ENCODE measurements at regions of chr19 and their contacts with region 1.

Region 1: GRCh38 chr19:1039646-1040475 is at the start of gene ABCA7:
- DNase-seq: peak; percentile 98 to 99 (median 98)
- H3K4me3 ChIP-seq: peak within 1 kb of the TSS; percentile 56 to 100
- H3K4me3 Mint-ChIP-seq: peak within 1 kb of the TSS; percentile 95 to 100 (median 97)
- H3K27ac ChIP-seq: peak within 1 kb of the TSS; percentile 75
- H3K27ac Mint-ChIP-seq: peak within 1 kb of the TSS; percentile 91 to 97 (median 95)
- H3K4me1 ChIP-seq: peaks cover 54% of the 10 kb centered on the region
- H3K4me1 Mint-ChIP-seq: peaks cover 27 to 69% (median 48%) of the 10 kb centered on the region in 4 donors
- H3K27me3 ChIP-seq: no peaks in the 10 kb centered on the region
- H3K27me3 Mint-ChIP-seq: no peaks in the 10 kb centered on the region
- total RNA-seq, gene ABCA7: 313 to 319 TPM

Region 2: DNA sequence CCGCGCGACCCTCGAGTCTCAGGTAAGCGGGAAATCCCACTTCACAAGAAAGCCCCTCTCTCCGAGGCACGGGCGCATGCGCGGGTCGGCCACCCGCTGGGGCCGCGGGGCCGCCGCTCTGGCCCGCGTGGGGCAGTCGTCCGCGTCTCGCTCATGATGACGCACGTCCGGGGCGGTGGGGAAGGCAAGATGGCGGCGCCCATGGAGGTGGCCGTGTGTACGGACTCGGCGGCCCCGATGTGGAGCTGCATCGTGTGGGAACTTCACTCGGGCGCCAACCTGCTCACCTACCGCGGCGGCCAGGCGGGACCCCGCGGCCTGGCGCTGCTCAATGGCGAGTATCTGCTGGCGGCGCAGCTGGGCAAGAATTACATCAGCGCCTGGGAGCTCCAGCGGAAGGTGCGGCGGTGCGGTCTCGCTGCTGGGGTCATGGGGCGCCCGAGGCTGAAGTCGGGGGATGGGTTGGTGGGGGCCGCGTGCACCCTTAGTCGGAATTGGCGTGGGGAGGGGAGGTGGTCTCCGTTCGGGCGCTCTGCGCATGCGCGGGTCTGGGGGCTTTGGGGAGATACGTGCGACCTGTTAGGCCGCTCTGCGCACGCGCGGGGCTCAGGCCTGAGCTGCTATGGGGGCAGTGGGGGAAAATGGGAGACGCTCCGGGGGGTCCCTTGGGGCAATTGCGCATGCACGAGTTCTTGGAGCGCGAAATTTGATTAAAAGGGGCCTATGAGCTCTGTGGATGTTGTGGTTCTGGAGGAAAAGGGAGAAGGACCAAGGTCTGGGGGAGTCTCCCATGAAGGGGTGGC is 55.5 kb before region 1 on chr19 and contains the start of gene WDR18:
- CTCF ChIA-PET with region 1: no interaction called
- POLR2A ChIA-PET with region 1: interaction called, 16 read pairs
- intact Hi-C with region 1: loop called (anchors 5 kb)
- DNase-seq: peak; percentile 79 to 87 (median 81)
- H3K4me3 ChIP-seq: peak within 1 kb of the TSS; percentile 65 to 69
- H3K4me3 Mint-ChIP-seq: peak within 1 kb of the TSS; percentile 89 to 96 (median 92)
- H3K27ac ChIP-seq: peak within 1 kb of the TSS; percentile 75
- H3K27ac Mint-ChIP-seq: peak within 1 kb of the TSS; percentile 84 to 96 (median 90)
- H3K4me1 ChIP-seq: peaks cover 24% of the 10 kb centered on the region
- H3K4me1 Mint-ChIP-seq: peaks cover 4 to 18% (median 12%) of the 10 kb centered on the region in 4 donors
- H3K27me3 ChIP-seq: no peaks in the 10 kb centered on the region
- H3K27me3 Mint-ChIP-seq: no peaks in the 10 kb centered on the region
- total RNA-seq, gene WDR18: 53.9 to 60.3 TPM

Region 3: GRCh38 chr19:1001538-1002166 is 38.2 kb before region 1 on chr19:
- CTCF ChIA-PET with region 1: no interaction called
- POLR2A ChIA-PET with region 1: interaction called, 12 read pairs
- intact Hi-C with region 1: loop called (anchors 2 kb)
- DNase-seq: peak; percentile 60 to 71 (median 61)
- H3K4me3 ChIP-seq: no peak overlapping the region
- H3K4me3 Mint-ChIP-seq: no peak overlapping the region
- H3K27ac ChIP-seq: no peak overlapping the region
- H3K27ac Mint-ChIP-seq: peak overlapping the region in 1 of 7 donors; percentile 21
- H3K4me1 ChIP-seq: peaks cover 15% of the 10 kb centered on the region
- H3K4me1 Mint-ChIP-seq: peaks cover 2 to 18% (median 10%) of the 10 kb centered on the region in 4 donors
- H3K27me3 ChIP-seq: peaks cover 26% of the 10 kb centered on the region
- H3K27me3 Mint-ChIP-seq: peaks cover 17 to 19% of the 10 kb centered on the region in 2 donors

Region 4: DNA sequence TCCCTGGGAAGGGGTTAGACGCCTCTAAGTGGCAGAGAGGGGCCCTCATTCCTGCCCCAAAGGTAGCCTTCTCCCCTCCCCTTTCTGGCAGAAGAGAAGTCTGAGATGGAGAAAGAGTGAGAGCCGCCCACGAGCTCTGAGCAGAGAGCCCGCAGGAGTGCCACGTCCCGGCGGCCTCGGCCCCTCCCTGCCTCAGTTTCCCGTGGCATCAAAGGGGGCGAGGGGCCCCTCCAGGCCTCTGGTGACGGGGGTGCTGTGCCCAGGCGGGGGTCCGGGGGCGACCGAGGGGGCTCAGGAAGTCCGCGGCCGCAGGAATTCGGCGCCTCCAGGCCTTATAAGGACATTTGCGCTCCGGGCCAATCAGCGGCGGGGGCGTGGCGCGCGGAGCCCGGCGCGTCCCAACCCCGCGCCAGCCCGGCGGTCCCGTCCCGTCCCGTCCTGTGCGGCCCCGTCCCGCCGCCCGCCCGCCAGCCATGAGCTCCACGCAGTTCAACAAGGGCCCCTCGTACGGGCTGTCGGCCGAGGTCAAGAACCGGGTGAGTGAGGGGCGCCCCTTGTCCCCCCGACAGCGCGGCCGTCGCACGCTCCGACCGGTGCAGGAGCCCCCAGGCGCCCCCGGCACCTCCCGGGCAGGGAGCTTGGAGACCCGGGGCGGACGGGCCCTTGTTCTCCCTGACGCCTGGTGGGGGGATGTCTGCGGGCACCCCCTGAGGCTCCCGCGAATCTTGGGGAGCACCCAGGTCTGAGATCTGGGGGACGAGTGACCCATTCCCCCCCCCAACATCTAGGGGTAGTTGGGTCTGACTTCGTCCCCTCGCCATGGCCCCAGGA is 13.5 kb before region 1 on chr19 and contains the start of gene CNN2:
- CTCF ChIA-PET with region 1: interaction called, 31 read pairs
- POLR2A ChIA-PET with region 1: interaction called, 562 read pairs
- intact Hi-C with region 1: loop called (anchors 1 kb)
- DNase-seq: peak in 4 of 5 donors; percentile 46 to 68 (median 60)
- H3K4me3 ChIP-seq: peak within 1 kb of the TSS; percentile 91 to 97
- H3K4me3 Mint-ChIP-seq: peak within 1 kb of the TSS; percentile 97 to 99 (median 98)
- H3K27ac ChIP-seq: peak within 1 kb of the TSS; percentile 83
- H3K27ac Mint-ChIP-seq: peak within 1 kb of the TSS; percentile 93 to 98 (median 95)
- H3K4me1 ChIP-seq: peaks cover 38% of the 10 kb centered on the region
- H3K4me1 Mint-ChIP-seq: peaks cover 11 to 38% (median 23%) of the 10 kb centered on the region in 4 donors
- H3K27me3 ChIP-seq: no peaks in the 10 kb centered on the region
- H3K27me3 Mint-ChIP-seq: peaks cover 0 to 2% of the 10 kb centered on the region in 2 donors
- total RNA-seq, gene CNN2: 263 to 266 TPM

Region 5: GRCh38 chr19:1074544-1075283 is 34.9 kb after region 1 on chr19:
- CTCF ChIA-PET with region 1: no interaction called
- POLR2A ChIA-PET with region 1: interaction called, 3,893 read pairs
- intact Hi-C with region 1: loop called (anchors 2 kb)
- DNase-seq: peak; percentile 91 to 94 (median 93)
- H3K4me3 ChIP-seq: peak overlapping the region in 1 of 2 donors; percentile 47
- H3K4me3 Mint-ChIP-seq: peak overlapping the region in 7 of 8 donors; percentile 66 to 93 (median 82)
- H3K27ac ChIP-seq: peak overlapping the region; percentile 84
- H3K27ac Mint-ChIP-seq: peak overlapping the region; percentile 94 to 99 (median 97)
- H3K4me1 ChIP-seq: peaks cover 85% of the 10 kb centered on the region
- H3K4me1 Mint-ChIP-seq: peaks cover 27 to 68% (median 43%) of the 10 kb centered on the region in 4 donors
- H3K27me3 ChIP-seq: no peaks in the 10 kb centered on the region
- H3K27me3 Mint-ChIP-seq: no peaks in the 10 kb centered on the region

Region 6: GRCh38 chr19:1131738-1132551 is 92.1 kb after region 1 on chr19:
- CTCF ChIA-PET with region 1: no interaction called
- POLR2A ChIA-PET with region 1: interaction called, 12 read pairs
- intact Hi-C with region 1: no loop called
- DNase-seq: peak; percentile 82 to 92 (median 83)
- H3K4me3 ChIP-seq: peak overlapping the region; percentile 61 to 89
- H3K4me3 Mint-ChIP-seq: peak overlapping the region; percentile 85 to 92 (median 88)
- H3K27ac ChIP-seq: peak overlapping the region; percentile 90
- H3K27ac Mint-ChIP-seq: peak overlapping the region; percentile 91 to 94 (median 94)
- H3K4me1 ChIP-seq: peaks cover 60% of the 10 kb centered on the region
- H3K4me1 Mint-ChIP-seq: peaks cover 7 to 35% (median 23%) of the 10 kb centered on the region in 4 donors
- H3K27me3 ChIP-seq: no peaks in the 10 kb centered on the region
- H3K27me3 Mint-ChIP-seq: no peaks in the 10 kb centered on the region

Measured in CD4-positive, alpha-beta memory T cell (primary cell).